ENCODE measurements at regions of chr14 and their contacts with region 1.

Region 1: DNA sequence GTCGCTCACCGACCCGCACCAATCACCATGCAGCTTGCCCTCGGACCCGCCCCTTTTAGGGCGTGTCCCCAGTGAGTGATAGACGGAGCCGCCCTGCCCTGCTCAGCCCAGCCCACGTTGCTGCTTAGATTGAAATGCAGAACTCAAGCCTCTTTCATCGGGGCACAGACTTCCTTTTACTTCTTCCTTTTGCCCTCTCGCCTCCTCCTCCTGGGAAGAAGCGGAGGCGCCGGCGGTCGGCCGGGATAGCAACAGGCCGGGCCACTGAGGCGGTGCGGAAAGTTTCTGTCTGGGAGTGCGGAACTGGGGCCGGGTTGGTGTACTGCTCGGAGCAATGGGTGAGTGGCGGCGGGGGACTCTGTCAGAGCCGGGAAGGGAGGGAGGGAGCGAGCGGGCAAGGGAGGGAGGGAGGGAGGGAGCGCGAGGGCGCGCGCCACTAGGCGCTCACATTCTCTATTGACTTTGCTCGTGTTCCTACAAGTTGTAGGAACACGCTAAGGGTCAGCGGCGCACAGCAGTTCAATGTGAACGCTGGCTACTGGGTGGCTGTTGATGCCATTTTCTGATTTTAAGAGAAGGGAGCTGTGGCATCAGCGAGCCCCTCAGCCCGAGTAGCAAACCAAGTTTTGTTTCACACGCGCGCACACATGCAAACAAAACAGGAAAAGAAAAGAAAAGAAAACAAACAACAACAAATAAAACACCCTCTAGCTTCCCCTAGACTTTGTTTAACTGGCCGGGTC is at the start of gene PAX9:
- DNase-seq: peak; percentile 95
- H3K4me3 Mint-ChIP-seq: peak within 1 kb of the TSS; percentile 87
- H3K27ac Mint-ChIP-seq: peak within 1 kb of the TSS; percentile 69
- H3K4me1 Mint-ChIP-seq: peaks cover 16% of the 10 kb centered on the region
- H3K27me3 Mint-ChIP-seq: peaks cover 29% of the 10 kb centered on the region
- CTCF ChIP-seq: no peak
- total RNA-seq, gene PAX9: 4.5 and 5.3 TPM in 2 replicates

Region 2: GRCh38 chr14:35789651-35790050 is 872.3 kb before region 1 on chr14:
- CTCF ChIA-PET with region 1: no interaction called
- intact Hi-C with region 1: no loop called
- DNase-seq: no peak
- H3K4me3 Mint-ChIP-seq: no peak overlapping the region
- H3K27ac Mint-ChIP-seq: no peak overlapping the region
- H3K4me1 Mint-ChIP-seq: no peaks in the 10 kb centered on the region
- H3K27me3 Mint-ChIP-seq: no peaks in the 10 kb centered on the region
- CTCF ChIP-seq: no peak

Region 3: DNA sequence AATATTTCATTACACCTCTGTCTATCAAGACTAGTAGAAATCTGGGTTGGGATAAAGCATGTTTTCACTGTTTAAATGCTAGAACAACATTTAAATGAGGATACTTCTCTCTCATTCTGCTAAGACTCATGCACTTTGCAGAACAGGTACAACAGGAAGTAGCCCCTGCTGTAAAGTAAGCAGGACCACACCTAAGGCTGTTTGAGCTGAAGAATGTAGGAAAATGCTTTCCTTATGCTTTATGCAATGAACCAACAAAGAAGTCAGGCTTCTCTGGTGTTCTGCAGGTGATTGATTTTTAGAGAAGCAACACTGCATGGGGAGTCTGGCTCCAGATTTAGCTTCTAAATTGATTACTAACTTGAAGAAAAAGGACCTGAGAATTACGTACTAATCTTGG is 89.2 kb after region 1 on chr14:
- CTCF ChIA-PET with region 1: interaction called, 5 read pairs
- intact Hi-C with region 1: loop called (anchors 5 kb)
- DNase-seq: peak; percentile 52
- H3K4me3 Mint-ChIP-seq: no peak overlapping the region
- H3K27ac Mint-ChIP-seq: no peak overlapping the region
- H3K4me1 Mint-ChIP-seq: peaks cover 17% of the 10 kb centered on the region
- H3K27me3 Mint-ChIP-seq: no peaks in the 10 kb centered on the region
- CTCF ChIP-seq: no peak

Measured in Calu3 (cell line).